Adrenal gland (tissue), 19 donors: ENCODE measurements at regions of chr16 and their contacts with region 1.

Region 1: GRCh38 chr16:46673320-46674013 is 15.5 kb downstream of the VPS35 start:
- DNase-seq: peak; percentile 40 to 79 (median 57)
- H3K4me3 ChIP-seq: no peak overlapping the region
- H3K27ac ChIP-seq: no peak overlapping the region
- H3K4me1 ChIP-seq: no peaks in the 10 kb centered on the region
- H3K27me3 ChIP-seq: no peaks in the 10 kb centered on the region
- CTCF ChIP-seq: peak; percentile 80 to 92 (median 90)
- POLR2A ChIP-seq: no peak

Region 2: GRCh38 chr16:46801428-46802049 is 128.1 kb after region 1 on chr16:
- intact Hi-C with region 1: loop called in 1 of 2 experiments (anchors 5 kb)
- DNase-seq: no peak
- H3K4me3 ChIP-seq: no peak overlapping the region
- H3K27ac ChIP-seq: no peak overlapping the region
- H3K4me1 ChIP-seq: no peaks in the 10 kb centered on the region
- H3K27me3 ChIP-seq: no peaks in the 10 kb centered on the region
- CTCF ChIP-seq: peak; percentile 27 to 59 (median 40)
- POLR2A ChIP-seq: no peak